PC-9 (cell line): ENCODE measurements at regions of chr13 and their contacts with region 1.

Region 1: GRCh38 chr13:95191821-95192563 is 109.3 kb downstream of the ABCC4 start:
- DNase-seq: peak; percentile 67 to 78
- H3K4me3 ChIP-seq: no peak overlapping the region
- H3K27ac ChIP-seq: no peak overlapping the region
- H3K4me1 ChIP-seq: no peaks in the 10 kb centered on the region
- H3K27me3 ChIP-seq: no peaks in the 10 kb centered on the region
- CTCF ChIP-seq: peak; percentile 96

Region 2: GRCh38 chr13:93758575-93758974 is 1433.4 kb before region 1 on chr13:
- CTCF ChIA-PET with region 1: no interaction called
- POLR2A ChIA-PET with region 1: no interaction called
- intact Hi-C with region 1: no loop called
- DNase-seq: no peak
- H3K4me3 ChIP-seq: no peak overlapping the region
- H3K27ac ChIP-seq: no peak overlapping the region
- H3K4me1 ChIP-seq: no peaks in the 10 kb centered on the region
- H3K27me3 ChIP-seq: no peaks in the 10 kb centered on the region
- CTCF ChIP-seq: no peak

Region 3: GRCh38 chr13:95128045-95128643 is 63.8 kb before region 1 on chr13:
- CTCF ChIA-PET with region 1: no interaction called
- POLR2A ChIA-PET with region 1: no interaction called
- intact Hi-C with region 1: no loop called
- DNase-seq: peak in 1 of 2 experiments; percentile 72
- H3K4me3 ChIP-seq: no peak overlapping the region
- H3K27ac ChIP-seq: no peak overlapping the region
- H3K4me1 ChIP-seq: peaks cover 4% of the 10 kb centered on the region; the same call in 1 of the 2 replicates
- H3K27me3 ChIP-seq: no peaks in the 10 kb centered on the region
- CTCF ChIP-seq: no peak

Region 4: DNA sequence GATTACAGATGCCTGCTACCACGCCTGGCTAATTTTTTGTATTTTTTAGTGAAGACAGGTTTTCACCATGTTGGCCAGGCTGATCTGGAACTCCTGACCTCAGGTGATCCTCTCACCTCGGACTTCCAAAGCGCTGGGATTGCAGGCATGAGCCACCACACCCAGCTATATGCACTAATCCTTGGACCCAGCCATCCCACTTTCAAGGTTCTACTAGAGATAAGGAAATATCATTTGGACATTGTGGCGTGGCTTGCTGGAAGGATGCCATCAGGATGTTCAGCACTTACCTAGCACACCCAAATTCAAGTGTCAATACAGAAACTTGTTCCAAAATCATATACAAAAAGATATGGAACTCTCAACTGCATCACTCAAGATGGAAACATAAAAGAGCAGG is 27.2 kb before region 1 on chr13:
- CTCF ChIA-PET with region 1: no interaction called
- POLR2A ChIA-PET with region 1: no interaction called
- intact Hi-C with region 1: no loop called
- DNase-seq: no peak
- H3K4me3 ChIP-seq: no peak overlapping the region
- H3K27ac ChIP-seq: no peak overlapping the region
- H3K4me1 ChIP-seq: no peaks in the 10 kb centered on the region
- H3K27me3 ChIP-seq: no peaks in the 10 kb centered on the region
- CTCF ChIP-seq: no peak

Region 5: GRCh38 chr13:95480131-95480545 is 288.1 kb after region 1 on chr13:
- CTCF ChIA-PET with region 1: interaction called, 3 read pairs
- POLR2A ChIA-PET with region 1: no interaction called
- intact Hi-C with region 1: loop called (anchors 1 kb)
- DNase-seq: no peak
- H3K4me3 ChIP-seq: no peak overlapping the region
- H3K27ac ChIP-seq: no peak overlapping the region
- H3K4me1 ChIP-seq: peaks cover 1% of the 10 kb centered on the region; the same call in 1 of the 2 replicates
- H3K27me3 ChIP-seq: 0 out of 2 replicates have a peak, but pooled peaks cover 4% of the 10 kb centered on the region
- CTCF ChIP-seq: no peak

Region 6: GRCh38 chr13:95536632-95537241 is 344.7 kb after region 1 on chr13:
- CTCF ChIA-PET with region 1: no interaction called
- POLR2A ChIA-PET with region 1: no interaction called
- intact Hi-C with region 1: no loop called
- DNase-seq: peak in 1 of 2 experiments; percentile 46
- H3K4me3 ChIP-seq: no peak overlapping the region
- H3K27ac ChIP-seq: no peak overlapping the region
- H3K4me1 ChIP-seq: peaks cover 49% of the 10 kb centered on the region
- H3K27me3 ChIP-seq: no peaks in the 10 kb centered on the region
- CTCF ChIP-seq: peak; percentile 62